CD8-positive, alpha-beta memory T cell (primary cell): ENCODE measurements at regions of chr10 and their contacts with region 1.

Region 1: GRCh38 chr10:119273413-119273812 is 66.0 kb downstream of the GRK5 start:
- DNase-seq: no peak
- H3K4me3 ChIP-seq: no peak overlapping the region
- H3K4me3 Mint-ChIP-seq: no peak overlapping the region
- H3K27ac ChIP-seq: no peak overlapping the region
- H3K27ac Mint-ChIP-seq: peak overlapping the region in 4 of 8 donors; percentile 69 to 84 (median 82)
- H3K4me1 ChIP-seq: peaks cover 52% of the 10 kb centered on the region
- H3K4me1 Mint-ChIP-seq: peaks cover 43 to 71% (median 64%) of the 10 kb centered on the region in 3 donors
- H3K27me3 ChIP-seq: no peaks in the 10 kb centered on the region
- H3K27me3 Mint-ChIP-seq: no peaks in the 10 kb centered on the region

Region 2: GRCh38 chr10:119305860-119306513 is 32.6 kb after region 1 on chr10:
- CTCF ChIA-PET with region 1: interaction called, 10 read pairs
- POLR2A ChIA-PET with region 1: interaction called, 9 read pairs
- DNase-seq: peak; percentile 68 to 96 (median 74)
- H3K4me3 ChIP-seq: peak overlapping the region; percentile 70
- H3K4me3 Mint-ChIP-seq: peak overlapping the region; percentile 73 to 95 (median 90)
- H3K27ac ChIP-seq: peak overlapping the region; percentile 83
- H3K27ac Mint-ChIP-seq: peak overlapping the region; percentile 92 to 98 (median 98)
- H3K4me1 ChIP-seq: peaks cover 66% of the 10 kb centered on the region
- H3K4me1 Mint-ChIP-seq: peaks cover 61 to 79% (median 64%) of the 10 kb centered on the region in 3 donors
- H3K27me3 ChIP-seq: no peaks in the 10 kb centered on the region
- H3K27me3 Mint-ChIP-seq: peaks cover 0 to 7% of the 10 kb centered on the region in 2 donors

Region 3: DNA sequence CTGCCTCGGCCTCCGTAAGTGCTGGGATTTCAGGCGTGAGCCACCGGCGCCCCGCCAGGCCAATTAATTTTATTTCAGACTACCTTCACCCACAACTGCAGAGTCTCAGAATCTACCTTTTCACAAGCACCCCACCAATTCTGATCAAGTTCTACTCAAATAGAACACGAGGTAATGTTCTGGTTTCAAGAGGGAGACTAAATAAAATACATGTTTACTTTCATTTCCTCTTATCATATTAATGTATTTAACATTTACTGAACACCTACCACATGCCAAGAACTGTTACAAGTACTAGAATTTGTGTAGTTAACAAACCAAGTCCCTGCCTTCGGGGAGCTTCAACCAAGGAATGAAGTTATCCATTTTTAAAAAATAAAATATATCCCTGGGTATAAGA is 294.6 kb after region 1 on chr10:
- CTCF ChIA-PET with region 1: no interaction called
- POLR2A ChIA-PET with region 1: no interaction called
- DNase-seq: no peak
- H3K4me3 ChIP-seq: no peak overlapping the region
- H3K4me3 Mint-ChIP-seq: no peak overlapping the region
- H3K27ac ChIP-seq: no peak overlapping the region
- H3K27ac Mint-ChIP-seq: no peak overlapping the region
- H3K4me1 ChIP-seq: no peaks in the 10 kb centered on the region
- H3K4me1 Mint-ChIP-seq: peaks cover 0 to 5% (median 5%) of the 10 kb centered on the region in 3 donors
- H3K27me3 ChIP-seq: no peaks in the 10 kb centered on the region
- H3K27me3 Mint-ChIP-seq: no peaks in the 10 kb centered on the region